ENCODE measurements at regions of chr1 and their contacts with region 1.

Region 1: GRCh38 chr1:155989242-155990004 is 11.1 kb upstream of the ARHGEF2 start:
- DNase-seq: peak; percentile 73 to 87 (median 81)
- H3K4me3 ChIP-seq: peak overlapping the region in 4 of 7 experiments; percentile 36 to 64 (median 37)
- H3K27ac ChIP-seq: no peak overlapping the region
- H3K4me1 ChIP-seq: peaks cover 0 to 22% (median 18%) of the 10 kb centered on the region in 4 experiments
- H3K27me3 ChIP-seq: no peaks in the 10 kb centered on the region

Region 2: GRCh38 chr1:155946633-155947219 is 42.7 kb before region 1 on chr1:
- CTCF ChIA-PET with region 1: interaction called, 18 read pairs
- POLR2A ChIA-PET with region 1: interaction called, 5 read pairs
- DNase-seq: no peak
- H3K4me3 ChIP-seq: peak overlapping the region in 1 of 7 experiments; percentile 25
- H3K27ac ChIP-seq: peak overlapping the region in 1 of 2 experiments; percentile 61
- H3K4me1 ChIP-seq: peaks cover 2 to 38% (median 29%) of the 10 kb centered on the region in 4 experiments
- H3K27me3 ChIP-seq: no peaks in the 10 kb centered on the region

Region 3: DNA sequence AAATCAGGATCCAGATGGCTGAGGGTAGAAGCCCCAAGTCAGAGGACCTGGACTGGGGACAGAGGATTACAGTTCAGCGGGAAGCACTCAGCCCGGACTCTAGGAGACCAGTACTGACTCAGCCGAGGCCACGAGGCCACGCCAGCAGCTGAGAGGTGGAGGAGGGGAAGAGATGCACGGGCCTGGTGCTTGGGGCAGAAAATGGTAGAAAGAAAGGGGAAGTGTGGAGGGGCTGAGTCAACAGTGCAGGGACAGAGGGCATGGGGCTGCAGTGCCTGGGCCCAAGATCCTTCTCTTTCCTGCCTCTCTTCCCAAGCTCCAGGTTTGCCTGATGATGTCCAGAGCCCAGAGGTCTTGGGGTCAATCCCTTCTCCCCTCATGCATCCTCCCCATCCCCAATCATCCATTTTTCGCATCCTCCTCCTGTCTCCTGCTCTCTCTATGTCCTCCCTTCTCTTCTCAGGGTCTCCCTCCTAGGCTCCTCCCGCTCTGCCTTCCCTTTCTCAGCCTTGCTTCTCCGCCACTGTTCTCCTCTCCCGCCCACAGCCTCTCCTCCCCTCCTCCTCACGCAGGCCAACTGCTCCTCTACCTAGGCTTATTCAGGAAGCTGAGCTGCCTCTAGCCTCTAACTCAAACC is 18.8 kb before region 1 on chr1:
- CTCF ChIA-PET with region 1: interaction called, 208 read pairs
- POLR2A ChIA-PET with region 1: interaction called, 4 read pairs
- DNase-seq: peak; percentile 75 to 91 (median 90)
- H3K4me3 ChIP-seq: peak overlapping the region in 6 of 7 experiments; percentile 12 to 62 (median 33)
- H3K27ac ChIP-seq: peak overlapping the region in 1 of 2 experiments; percentile 95
- H3K4me1 ChIP-seq: peaks cover 39 to 95% (median 92%) of the 10 kb centered on the region in 4 experiments
- H3K27me3 ChIP-seq: no peaks in the 10 kb centered on the region

Region 4: DNA sequence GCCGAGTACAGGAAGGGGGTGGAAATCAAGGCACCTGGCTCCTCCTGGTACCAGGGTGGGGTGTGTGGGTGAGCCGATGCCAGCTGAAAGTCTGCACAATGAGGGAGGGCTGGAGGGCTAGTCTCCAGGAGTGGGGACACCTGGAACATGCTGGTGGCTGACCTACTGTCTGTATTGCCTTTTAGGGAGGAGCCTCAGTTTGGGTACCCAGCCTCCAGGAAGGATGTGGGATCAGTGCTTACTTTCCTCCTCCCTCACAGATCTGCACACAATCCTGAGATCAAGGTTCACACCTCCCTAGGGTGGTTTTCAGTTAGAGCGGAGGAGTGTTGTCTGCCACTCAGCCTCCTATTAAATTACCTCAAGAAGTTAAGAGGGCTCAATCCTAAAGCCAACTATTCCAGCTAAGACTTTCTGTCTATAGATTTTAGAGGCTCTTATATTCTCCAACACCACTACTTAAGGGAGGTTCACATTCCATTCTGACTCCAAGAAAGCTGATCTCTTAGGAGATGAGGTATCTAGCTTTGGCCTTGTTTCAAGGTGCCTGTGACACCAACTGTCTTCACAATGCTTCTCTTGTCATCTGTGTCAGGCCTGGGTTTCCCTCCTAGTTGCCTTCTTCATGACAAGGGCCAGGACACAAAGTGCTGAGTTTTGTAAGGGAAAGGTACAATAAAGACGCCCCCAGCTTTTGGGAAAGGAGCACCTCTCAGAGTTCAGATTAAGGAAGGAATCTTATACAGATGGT is 15.6 kb after region 1 on chr1:
- CTCF ChIA-PET with region 1: interaction called, 28 read pairs
- POLR2A ChIA-PET with region 1: interaction called, 3 read pairs
- DNase-seq: no peak
- H3K4me3 ChIP-seq: peak overlapping the region in 1 of 7 experiments; percentile 38
- H3K27ac ChIP-seq: no peak overlapping the region
- H3K4me1 ChIP-seq: peaks cover 3 to 18% (median 12%) of the 10 kb centered on the region in 4 experiments
- H3K27me3 ChIP-seq: no peaks in the 10 kb centered on the region

Region 5: GRCh38 chr1:156383023-156383422 is 393.6 kb after region 1 on chr1:
- CTCF ChIA-PET with region 1: no interaction called
- POLR2A ChIA-PET with region 1: no interaction called
- DNase-seq: peak; percentile 62 to 76 (median 69)
- H3K4me3 ChIP-seq: no peak overlapping the region
- H3K27ac ChIP-seq: no peak overlapping the region
- H3K4me1 ChIP-seq: peaks cover 3 to 21% (median 17%) of the 10 kb centered on the region in 4 experiments
- H3K27me3 ChIP-seq: peaks cover 0 to 20% (median 10%) of the 10 kb centered on the region in 5 experiments

Region 6: DNA sequence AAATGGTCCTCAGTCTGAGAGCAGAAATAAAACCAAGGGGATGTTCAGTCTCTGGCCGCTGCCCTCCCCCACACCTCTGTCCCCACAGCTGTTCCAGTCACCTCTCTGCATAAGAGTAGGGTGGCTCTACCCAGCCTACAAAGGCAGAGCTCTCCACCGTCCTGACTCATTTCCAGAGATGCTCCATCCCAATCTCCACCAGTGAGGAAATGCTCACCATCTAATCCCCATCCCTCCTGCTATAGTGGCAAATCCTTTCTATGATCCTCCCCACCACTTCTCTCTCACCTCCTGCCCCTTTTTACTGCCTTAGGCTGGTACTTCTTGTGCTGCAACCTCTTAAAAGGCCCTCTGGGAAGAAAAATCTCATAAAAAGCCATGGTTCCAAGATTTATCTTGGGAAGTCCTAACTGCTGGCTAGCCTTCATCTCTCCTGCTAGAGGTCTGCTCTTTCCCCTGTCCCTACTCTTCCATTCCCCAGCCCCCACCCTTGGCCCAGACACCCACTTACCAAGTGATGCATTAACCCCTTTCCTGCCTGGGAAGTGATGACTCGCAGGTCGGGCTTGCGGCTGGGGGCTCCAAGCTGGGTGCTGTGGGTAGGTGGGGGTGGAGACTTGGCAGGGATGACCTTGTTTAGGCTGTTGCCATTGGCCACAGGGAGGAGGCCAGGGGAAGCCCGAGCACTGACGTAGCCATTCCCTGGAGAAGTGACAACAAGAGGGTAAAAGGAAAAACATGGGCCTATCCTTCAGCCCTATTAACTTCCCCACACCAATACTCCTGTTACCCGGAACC is 487.3 kb after region 1 on chr1:
- CTCF ChIA-PET with region 1: no interaction called
- POLR2A ChIA-PET with region 1: no interaction called
- DNase-seq: no peak
- H3K4me3 ChIP-seq: no peak overlapping the region
- H3K27ac ChIP-seq: no peak overlapping the region
- H3K4me1 ChIP-seq: peaks cover 0 to 18% (median 10%) of the 10 kb centered on the region in 4 experiments
- H3K27me3 ChIP-seq: no peaks in the 10 kb centered on the region

Measured in common myeloid progenitor, CD34-positive (primary cell).